MCF 10A (cell line): ENCODE measurements at regions of chr5 and their contacts with region 1.

Region 1: GRCh38 chr5:145825751-145826180 is 9.4 kb downstream of the PRELID2 start:
- DNase-seq: peak; percentile 76
- H3K4me3 Mint-ChIP-seq: no peak overlapping the region
- H3K27ac Mint-ChIP-seq: no peak overlapping the region
- H3K4me1 Mint-ChIP-seq: peaks cover 26% of the 10 kb centered on the region
- H3K27me3 Mint-ChIP-seq: no peaks in the 10 kb centered on the region
- CTCF ChIP-seq: peak; percentile 97

Region 2: DNA sequence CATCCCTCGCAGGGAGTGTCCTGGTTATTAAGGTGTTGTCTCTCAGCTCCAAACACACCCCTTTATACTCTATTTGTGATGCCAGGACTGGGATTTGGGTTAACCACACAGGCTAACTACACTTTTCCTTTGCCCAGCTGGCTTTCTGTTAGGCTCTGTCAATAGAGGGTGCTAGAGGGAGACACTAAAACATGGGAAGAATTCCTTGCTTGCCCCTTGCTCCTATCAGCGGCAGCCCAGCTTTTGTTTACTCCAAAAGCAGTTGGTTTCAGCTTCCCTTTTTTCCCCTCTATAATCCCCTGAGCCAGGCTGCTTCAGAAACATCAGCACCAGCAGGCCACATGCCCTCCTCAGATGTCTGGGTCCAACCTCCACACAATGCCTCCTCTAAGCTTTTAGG is 1358.0 kb before region 1 on chr5:
- CTCF ChIA-PET with region 1: interaction called, 4 read pairs
- POLR2A ChIA-PET with region 1: no interaction called
- intact Hi-C with region 1: loop called (anchors 5 kb)
- DNase-seq: peak; percentile 78
- H3K4me3 Mint-ChIP-seq: no peak overlapping the region
- H3K27ac Mint-ChIP-seq: no peak overlapping the region
- H3K4me1 Mint-ChIP-seq: no peaks in the 10 kb centered on the region
- H3K27me3 Mint-ChIP-seq: no peaks in the 10 kb centered on the region
- CTCF ChIP-seq: peak; percentile 82

Region 3: GRCh38 chr5:144598451-144599068 is 1227.2 kb before region 1 on chr5:
- CTCF ChIA-PET with region 1: no interaction called
- POLR2A ChIA-PET with region 1: no interaction called
- intact Hi-C with region 1: no loop called
- DNase-seq: no peak
- H3K4me3 Mint-ChIP-seq: no peak overlapping the region
- H3K27ac Mint-ChIP-seq: no peak overlapping the region
- H3K4me1 Mint-ChIP-seq: no peaks in the 10 kb centered on the region
- H3K27me3 Mint-ChIP-seq: no peaks in the 10 kb centered on the region
- CTCF ChIP-seq: no peak

Region 4: GRCh38 chr5:145681686-145682085 is 144.1 kb before region 1 on chr5:
- CTCF ChIA-PET with region 1: interaction called, 131 read pairs
- POLR2A ChIA-PET with region 1: interaction called, 8 read pairs
- intact Hi-C with region 1: loop called (anchors 1 kb)
- DNase-seq: peak; percentile 94
- H3K4me3 Mint-ChIP-seq: no peak overlapping the region
- H3K27ac Mint-ChIP-seq: no peak overlapping the region
- H3K4me1 Mint-ChIP-seq: no peaks in the 10 kb centered on the region
- H3K27me3 Mint-ChIP-seq: no peaks in the 10 kb centered on the region
- CTCF ChIP-seq: peak; percentile 87

Region 5: DNA sequence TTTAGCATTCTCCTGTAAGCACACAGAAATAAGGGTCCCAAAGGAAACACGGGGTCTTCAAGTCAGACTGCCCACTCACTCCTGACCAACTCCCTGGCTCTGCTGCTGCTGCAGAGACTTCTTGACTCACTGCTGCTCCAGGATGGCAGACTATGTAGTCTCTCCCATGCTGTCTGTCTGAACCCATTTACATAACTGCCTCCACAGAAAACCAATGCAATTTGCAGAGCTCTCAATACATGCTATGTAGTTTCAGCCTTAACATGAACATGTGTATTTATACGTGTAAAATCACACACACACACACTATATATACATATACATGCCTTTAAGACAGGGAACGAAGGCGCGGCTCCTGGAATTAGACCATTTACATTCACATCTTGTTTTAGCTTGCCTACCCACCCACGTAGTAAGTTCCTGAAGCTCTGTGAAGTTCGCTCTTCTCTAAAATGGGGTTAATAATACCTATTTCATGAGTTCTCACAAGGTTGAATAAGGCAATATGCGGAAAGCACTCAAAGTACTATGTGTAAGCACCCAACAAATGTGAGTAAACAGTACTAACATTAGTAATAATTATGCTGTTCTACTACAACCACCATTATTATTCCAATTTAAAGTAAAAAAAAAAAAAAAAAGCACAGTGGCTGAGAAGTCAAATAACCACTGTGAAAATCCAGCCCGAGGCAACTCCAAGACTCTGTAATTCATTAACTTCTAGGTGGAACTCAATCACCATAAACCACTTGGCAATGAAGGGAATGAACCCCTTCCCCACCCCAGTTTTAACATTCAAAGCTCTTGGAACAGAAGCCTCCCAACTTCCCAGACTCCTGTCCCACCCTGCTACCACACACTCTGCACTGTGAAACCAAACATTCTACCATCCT is 22.4 kb before region 1 on chr5:
- CTCF ChIA-PET with region 1: interaction called, 38 read pairs
- POLR2A ChIA-PET with region 1: interaction called, 3 read pairs
- intact Hi-C with region 1: no loop called
- DNase-seq: no peak
- H3K4me3 Mint-ChIP-seq: no peak overlapping the region
- H3K27ac Mint-ChIP-seq: no peak overlapping the region
- H3K4me1 Mint-ChIP-seq: peaks cover 20% of the 10 kb centered on the region
- H3K27me3 Mint-ChIP-seq: no peaks in the 10 kb centered on the region
- CTCF ChIP-seq: no peak

Region 6: DNA sequence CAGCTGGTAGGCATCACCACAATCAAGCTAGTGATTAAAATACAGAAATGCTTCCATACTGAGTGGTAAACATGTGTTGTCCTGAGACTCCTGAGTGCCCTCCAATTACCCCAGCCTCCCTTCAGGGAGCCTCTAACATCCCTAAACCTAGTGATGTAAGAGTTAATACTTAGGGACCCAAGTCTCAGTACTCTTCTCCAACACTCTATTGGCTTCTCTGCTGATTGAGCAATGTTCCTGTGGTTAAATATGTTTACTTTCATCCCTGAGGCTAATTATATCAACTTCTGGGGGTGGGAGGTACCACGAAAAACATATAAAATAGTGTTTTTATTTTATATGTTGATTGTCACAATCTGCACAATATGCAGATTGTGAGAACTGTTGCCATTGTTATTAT is 42.0 kb after region 1 on chr5:
- CTCF ChIA-PET with region 1: interaction called, 11 read pairs
- POLR2A ChIA-PET with region 1: no interaction called
- intact Hi-C with region 1: no loop called
- DNase-seq: peak; percentile 42
- H3K4me3 Mint-ChIP-seq: no peak overlapping the region
- H3K27ac Mint-ChIP-seq: no peak overlapping the region
- H3K4me1 Mint-ChIP-seq: no peaks in the 10 kb centered on the region
- H3K27me3 Mint-ChIP-seq: no peaks in the 10 kb centered on the region
- CTCF ChIP-seq: no peak

Region 7: GRCh38 chr5:146049014-146049703 is 223.4 kb after region 1 on chr5:
- CTCF ChIA-PET with region 1: interaction called, 144 read pairs
- POLR2A ChIA-PET with region 1: no interaction called
- intact Hi-C with region 1: no loop called
- DNase-seq: peak; percentile 91
- H3K4me3 Mint-ChIP-seq: no peak overlapping the region
- H3K27ac Mint-ChIP-seq: peak overlapping the region; percentile 4
- H3K4me1 Mint-ChIP-seq: peaks cover 31% of the 10 kb centered on the region
- H3K27me3 Mint-ChIP-seq: no peaks in the 10 kb centered on the region
- CTCF ChIP-seq: peak; percentile 90

Region 8: GRCh38 chr5:146283344-146283761 is 457.6 kb after region 1 on chr5:
- CTCF ChIA-PET with region 1: no interaction called
- POLR2A ChIA-PET with region 1: no interaction called
- intact Hi-C with region 1: no loop called
- DNase-seq: peak; percentile 89
- H3K4me3 Mint-ChIP-seq: peak overlapping the region; percentile 0
- H3K27ac Mint-ChIP-seq: peak overlapping the region; percentile 88
- H3K4me1 Mint-ChIP-seq: peaks cover 20% of the 10 kb centered on the region
- H3K27me3 Mint-ChIP-seq: no peaks in the 10 kb centered on the region
- CTCF ChIP-seq: no peak

Region 9: DNA sequence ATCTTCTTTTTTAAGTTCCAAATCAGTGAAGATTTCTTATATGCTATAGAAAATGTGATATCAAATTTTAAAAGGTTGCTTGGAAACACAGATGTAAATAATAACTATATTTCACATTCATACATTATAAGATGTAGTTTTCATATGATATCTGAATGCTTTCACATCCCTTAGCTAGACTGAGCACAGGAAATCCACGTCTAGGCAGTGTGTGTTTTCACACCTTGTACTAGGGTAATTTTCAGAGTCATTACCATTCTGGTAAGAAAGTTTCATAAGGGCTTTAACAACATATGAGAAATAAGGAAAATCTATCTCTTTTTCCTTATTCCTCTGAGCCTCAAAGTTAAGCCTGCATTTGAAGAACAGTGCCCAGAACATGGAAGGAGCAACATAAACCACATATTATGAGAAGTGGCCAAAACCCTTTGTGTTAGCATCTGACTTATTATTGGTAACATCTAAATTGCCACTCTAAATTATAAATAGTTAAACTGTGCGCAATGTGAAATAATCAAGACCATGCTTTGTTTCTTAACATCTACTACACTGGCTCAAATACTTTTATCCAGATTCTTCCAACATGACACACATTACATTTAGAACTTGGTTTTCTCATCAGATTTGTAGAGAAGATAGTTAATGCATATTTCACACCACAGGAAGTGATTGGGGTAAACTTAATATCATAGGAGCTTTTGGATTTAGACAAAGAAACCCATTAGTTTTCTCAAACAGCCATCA is 939.5 kb after region 1 on chr5:
- CTCF ChIA-PET with region 1: no interaction called
- POLR2A ChIA-PET with region 1: no interaction called
- intact Hi-C with region 1: no loop called
- DNase-seq: no peak
- H3K4me3 Mint-ChIP-seq: no peak overlapping the region
- H3K27ac Mint-ChIP-seq: no peak overlapping the region
- H3K4me1 Mint-ChIP-seq: no peaks in the 10 kb centered on the region
- H3K27me3 Mint-ChIP-seq: no peaks in the 10 kb centered on the region
- CTCF ChIP-seq: no peak